Mammary epithelial cell (primary cell): ENCODE measurements at regions of chr1 and their contacts with region 1.

Region 1: GRCh38 chr1:153990468-153991150 is at the start of gene RPS27:
- DNase-seq: peak; percentile 95
- H3K4me3 ChIP-seq: peak within 1 kb of the TSS; percentile 75 to 78 (median 77)
- H3K27ac ChIP-seq: peak within 1 kb of the TSS; percentile 93
- H3K4me1 ChIP-seq: peaks cover 21% of the 10 kb centered on the region
- H3K27me3 ChIP-seq: no peaks in the 10 kb centered on the region
- CTCF ChIP-seq: no peak
- total RNA-seq, gene RPS27: 1,002 to 1,257 TPM

Region 2: DNA sequence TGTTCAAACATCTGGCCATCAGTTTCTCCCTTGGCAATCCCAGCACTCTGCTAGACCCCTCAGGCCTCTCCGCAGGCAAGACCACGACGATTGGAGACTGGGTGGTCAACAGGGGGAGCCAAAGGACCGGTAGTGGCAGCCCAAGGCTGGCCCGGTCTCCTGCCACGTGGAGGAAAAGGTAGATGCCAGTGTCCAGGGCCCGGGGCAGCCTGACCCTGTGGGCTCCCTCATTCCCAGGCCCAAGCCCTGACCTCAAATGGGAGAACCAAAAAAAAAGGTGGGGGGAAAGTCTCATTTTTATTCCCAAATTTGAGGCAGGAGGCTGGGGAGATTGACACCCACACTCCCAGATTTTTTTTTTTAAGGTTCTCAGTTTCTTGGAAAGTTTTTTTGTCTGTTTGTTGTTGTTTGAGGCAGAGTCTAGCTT is 479.6 kb before region 1 on chr1:
- CTCF ChIA-PET with region 1: no interaction called
- dilution Hi-C with region 1: no loop called
- in situ Hi-C with region 1: no loop called
- intact Hi-C with region 1: loop called (anchors 2 kb)
- DNase-seq: peak; percentile 59
- H3K4me3 ChIP-seq: no peak overlapping the region
- H3K27ac ChIP-seq: peak overlapping the region; percentile 39
- H3K4me1 ChIP-seq: peaks cover 59% of the 10 kb centered on the region
- H3K27me3 ChIP-seq: no peaks in the 10 kb centered on the region
- CTCF ChIP-seq: peak; percentile 88 to 99

Region 3: GRCh38 chr1:153572569-153573015 is 418.0 kb before region 1 on chr1:
- CTCF ChIA-PET with region 1: no interaction called
- dilution Hi-C with region 1: no loop called
- in situ Hi-C with region 1: no loop called
- intact Hi-C with region 1: loop called (anchors 1 kb)
- DNase-seq: peak; percentile 89
- H3K4me3 ChIP-seq: no peak overlapping the region
- H3K27ac ChIP-seq: peak overlapping the region; percentile 78
- H3K4me1 ChIP-seq: peaks cover 39% of the 10 kb centered on the region
- H3K27me3 ChIP-seq: no peaks in the 10 kb centered on the region
- CTCF ChIP-seq: peak; percentile 92 to 99

Region 4: DNA sequence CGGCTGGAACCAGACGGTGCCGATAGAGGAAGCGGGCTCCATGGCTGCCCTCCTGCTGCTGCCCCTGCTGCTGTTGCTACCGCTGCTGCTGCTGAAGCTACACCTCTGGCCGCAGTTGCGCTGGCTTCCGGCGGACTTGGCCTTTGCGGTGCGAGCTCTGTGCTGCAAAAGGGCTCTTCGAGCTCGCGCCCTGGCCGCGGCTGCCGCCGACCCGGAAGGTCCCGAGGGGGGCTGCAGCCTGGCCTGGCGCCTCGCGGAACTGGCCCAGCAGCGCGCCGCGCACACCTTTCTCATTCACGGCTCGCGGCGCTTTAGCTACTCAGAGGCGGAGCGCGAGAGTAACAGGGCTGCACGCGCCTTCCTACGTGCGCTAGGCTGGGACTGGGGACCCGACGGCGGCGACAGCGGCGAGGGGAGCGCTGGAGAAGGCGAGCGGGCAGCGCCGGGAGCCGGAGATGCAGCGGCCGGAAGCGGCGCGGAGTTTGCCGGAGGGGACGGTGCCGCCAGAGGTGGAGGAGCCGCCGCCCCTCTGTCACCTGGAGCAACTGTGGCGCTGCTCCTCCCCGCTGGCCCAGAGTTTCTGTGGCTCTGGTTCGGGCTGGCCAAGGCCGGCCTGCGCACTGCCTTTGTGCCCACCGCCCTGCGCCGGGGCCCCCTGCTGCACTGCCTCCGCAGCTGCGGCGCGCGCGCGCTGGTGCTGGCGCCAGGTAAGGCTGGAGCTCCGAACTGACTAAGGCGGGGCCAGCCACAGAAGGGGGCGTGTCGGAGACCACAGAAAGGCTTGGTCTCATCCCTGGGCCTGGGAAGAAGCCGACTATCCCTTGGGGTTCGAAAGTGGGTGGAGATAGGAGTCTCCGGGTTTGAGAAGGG is 214.9 kb before region 1 on chr1:
- CTCF ChIA-PET with region 1: no interaction called
- dilution Hi-C with region 1: no loop called
- in situ Hi-C with region 1: no loop called
- intact Hi-C with region 1: loop called (anchors 2 kb)
- DNase-seq: peak; percentile 74
- H3K4me3 ChIP-seq: peak overlapping the region; percentile 61 to 67 (median 65)
- H3K27ac ChIP-seq: no peak overlapping the region
- H3K4me1 ChIP-seq: peaks cover 27% of the 10 kb centered on the region
- H3K27me3 ChIP-seq: no peaks in the 10 kb centered on the region
- CTCF ChIP-seq: peak in 1 of 2 donors; percentile 20

Region 5: GRCh38 chr1:153816283-153816889 is 174.2 kb before region 1 on chr1:
- CTCF ChIA-PET with region 1: no interaction called
- dilution Hi-C with region 1: no loop called
- in situ Hi-C with region 1: no loop called
- intact Hi-C with region 1: loop called (anchors 1 kb)
- DNase-seq: no peak
- H3K4me3 ChIP-seq: no peak overlapping the region
- H3K27ac ChIP-seq: no peak overlapping the region
- H3K4me1 ChIP-seq: no peaks in the 10 kb centered on the region
- H3K27me3 ChIP-seq: no peaks in the 10 kb centered on the region
- CTCF ChIP-seq: no peak

Region 6: GRCh38 chr1:153946622-153947241 is 43.9 kb before region 1 on chr1 and contains the start of gene DENND4B:
- CTCF ChIA-PET with region 1: no interaction called
- dilution Hi-C with region 1: no loop called
- in situ Hi-C with region 1: no loop called
- intact Hi-C with region 1: loop called (anchors 1 kb)
- DNase-seq: peak; percentile 64
- H3K4me3 ChIP-seq: peak within 1 kb of the TSS; percentile 71 to 88 (median 79)
- H3K27ac ChIP-seq: peak within 1 kb of the TSS; percentile 65
- H3K4me1 ChIP-seq: peaks cover 8% of the 10 kb centered on the region
- H3K27me3 ChIP-seq: no peaks in the 10 kb centered on the region
- CTCF ChIP-seq: peak; percentile 72 to 90
- total RNA-seq, gene DENND4B: 12.3 to 36.9 TPM

Region 7: GRCh38 chr1:154183045-154183915 is 192.7 kb after region 1 on chr1:
- CTCF ChIA-PET with region 1: no interaction called
- dilution Hi-C with region 1: no loop called
- in situ Hi-C with region 1: no loop called
- intact Hi-C with region 1: loop called (anchors 5 kb)
- DNase-seq: peak; percentile 99
- H3K4me3 ChIP-seq: peak overlapping the region; percentile 85 to 96 (median 91)
- H3K27ac ChIP-seq: peak overlapping the region; percentile 94
- H3K4me1 ChIP-seq: peaks cover 34% of the 10 kb centered on the region
- H3K27me3 ChIP-seq: no peaks in the 10 kb centered on the region
- CTCF ChIP-seq: peak in 1 of 2 donors; percentile 10

Region 8: GRCh38 chr1:154237435-154237834 is 246.8 kb after region 1 on chr1:
- CTCF ChIA-PET with region 1: no interaction called
- dilution Hi-C with region 1: no loop called
- in situ Hi-C with region 1: no loop called
- intact Hi-C with region 1: no loop called
- DNase-seq: no peak
- H3K4me3 ChIP-seq: no peak overlapping the region
- H3K27ac ChIP-seq: no peak overlapping the region
- H3K4me1 ChIP-seq: no peaks in the 10 kb centered on the region
- H3K27me3 ChIP-seq: no peaks in the 10 kb centered on the region
- CTCF ChIP-seq: no peak